ENCODE measurements at regions of chr5 and their contacts with region 1.

Region 1: GRCh38 chr5:108521841-108522506 is 140.1 kb upstream of the FBXL17 start:
- DNase-seq: peak; percentile 74
- H3K4me3 Mint-ChIP-seq: no peak overlapping the region
- H3K27ac Mint-ChIP-seq: no peak overlapping the region
- H3K4me1 Mint-ChIP-seq: no peaks in the 10 kb centered on the region
- H3K27me3 Mint-ChIP-seq: peaks cover 34% of the 10 kb centered on the region
- CTCF ChIP-seq: peak; percentile 56

Region 2: GRCh38 chr5:108016101-108016500 is 505.9 kb before region 1 on chr5:
- CTCF ChIA-PET with region 1: no interaction called
- POLR2A ChIA-PET with region 1: no interaction called
- intact Hi-C with region 1: no loop called
- DNase-seq: no peak
- H3K4me3 Mint-ChIP-seq: no peak overlapping the region
- H3K27ac Mint-ChIP-seq: no peak overlapping the region
- H3K4me1 Mint-ChIP-seq: no peaks in the 10 kb centered on the region
- H3K27me3 Mint-ChIP-seq: no peaks in the 10 kb centered on the region
- CTCF ChIP-seq: no peak

Region 3: GRCh38 chr5:108461628-108462367 is 60.2 kb before region 1 on chr5:
- CTCF ChIA-PET with region 1: no interaction called
- POLR2A ChIA-PET with region 1: no interaction called
- intact Hi-C with region 1: no loop called
- DNase-seq: peak; percentile 54
- H3K4me3 Mint-ChIP-seq: no peak overlapping the region
- H3K27ac Mint-ChIP-seq: no peak overlapping the region
- H3K4me1 Mint-ChIP-seq: peaks cover 9% of the 10 kb centered on the region
- H3K27me3 Mint-ChIP-seq: no peaks in the 10 kb centered on the region
- CTCF ChIP-seq: no peak

Region 4: GRCh38 chr5:108472237-108472636 is 49.7 kb before region 1 on chr5:
- CTCF ChIA-PET with region 1: no interaction called
- POLR2A ChIA-PET with region 1: no interaction called
- intact Hi-C with region 1: no loop called
- DNase-seq: no peak
- H3K4me3 Mint-ChIP-seq: no peak overlapping the region
- H3K27ac Mint-ChIP-seq: no peak overlapping the region
- H3K4me1 Mint-ChIP-seq: no peaks in the 10 kb centered on the region
- H3K27me3 Mint-ChIP-seq: peaks cover 14% of the 10 kb centered on the region
- CTCF ChIP-seq: no peak

Region 5: DNA sequence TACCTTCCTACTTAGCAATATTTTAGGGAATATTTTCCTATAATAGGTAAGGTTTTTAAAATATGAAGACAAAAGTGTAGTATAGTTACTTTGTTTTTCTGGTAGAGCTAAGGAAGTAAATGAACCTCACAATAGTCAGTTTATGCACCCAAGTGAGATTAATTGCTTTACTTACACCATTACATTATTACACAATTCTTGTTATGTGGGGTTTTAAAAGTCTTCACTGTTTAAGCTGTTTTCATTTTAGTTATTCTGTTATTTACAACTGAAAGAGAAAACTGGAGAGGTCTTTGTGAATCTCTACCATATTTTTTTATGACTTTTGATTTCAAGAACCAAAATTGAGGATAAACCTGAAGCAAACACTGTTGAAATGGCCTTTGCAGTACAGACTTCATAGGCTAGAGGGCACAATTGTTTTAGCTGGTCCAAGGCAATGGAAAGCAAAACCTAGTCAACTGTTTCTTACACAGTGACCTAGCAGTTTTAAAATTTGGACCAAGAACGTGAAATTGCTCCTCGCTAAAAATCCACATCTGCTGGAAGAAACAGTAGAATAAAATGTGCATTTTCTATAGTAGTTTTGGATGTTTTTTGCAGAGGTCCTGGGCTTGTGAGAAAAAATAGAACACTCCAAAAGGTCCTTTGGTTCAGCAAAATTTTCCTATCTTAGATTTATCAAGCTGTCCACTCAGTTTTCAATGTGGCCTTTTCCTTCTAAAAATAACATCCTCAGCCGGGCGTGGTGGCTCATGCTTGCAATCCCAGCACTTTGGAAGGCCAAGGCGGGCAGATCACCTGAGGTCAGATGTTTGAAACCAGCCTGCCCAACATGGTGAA is 159.3 kb after region 1 on chr5:
- CTCF ChIA-PET with region 1: no interaction called
- POLR2A ChIA-PET with region 1: interaction called, 3 read pairs
- intact Hi-C with region 1: loop called (anchors 2 kb)
- DNase-seq: peak; percentile 73
- H3K4me3 Mint-ChIP-seq: no peak overlapping the region
- H3K27ac Mint-ChIP-seq: no peak overlapping the region
- H3K4me1 Mint-ChIP-seq: no peaks in the 10 kb centered on the region
- H3K27me3 Mint-ChIP-seq: peaks cover 16% of the 10 kb centered on the region
- CTCF ChIP-seq: peak; percentile 69

Region 6: GRCh38 chr5:109479260-109479860 is 957.4 kb after region 1 on chr5:
- CTCF ChIA-PET with region 1: interaction called, 3 read pairs
- POLR2A ChIA-PET with region 1: no interaction called
- intact Hi-C with region 1: loop called (anchors 5 kb)
- DNase-seq: peak; percentile 23
- H3K4me3 Mint-ChIP-seq: no peak overlapping the region
- H3K27ac Mint-ChIP-seq: no peak overlapping the region
- H3K4me1 Mint-ChIP-seq: no peaks in the 10 kb centered on the region
- H3K27me3 Mint-ChIP-seq: no peaks in the 10 kb centered on the region
- CTCF ChIP-seq: peak; percentile 28